Left colon (tissue), 2 donors: ENCODE measurements at regions of chr10 and their contacts with region 1.

Region 1: GRCh38 chr10:47311932-47312662 is 10.2 kb upstream of the GDF2 start:
- DNase-seq: peak; percentile 81 to 90
- ATAC-seq: peak; percentile 92

Region 2: GRCh38 chr10:47047671-47048525 is 264.2 kb before region 1 on chr10:
- intact Hi-C with region 1: loop called in 1 of 2 experiments (anchors 5 kb)
- DNase-seq: peak; percentile 45 to 89
- ATAC-seq: peak; percentile 89